HepG2 (cell line): ENCODE measurements at regions of chr2 and their contacts with region 1.

Region 1: DNA sequence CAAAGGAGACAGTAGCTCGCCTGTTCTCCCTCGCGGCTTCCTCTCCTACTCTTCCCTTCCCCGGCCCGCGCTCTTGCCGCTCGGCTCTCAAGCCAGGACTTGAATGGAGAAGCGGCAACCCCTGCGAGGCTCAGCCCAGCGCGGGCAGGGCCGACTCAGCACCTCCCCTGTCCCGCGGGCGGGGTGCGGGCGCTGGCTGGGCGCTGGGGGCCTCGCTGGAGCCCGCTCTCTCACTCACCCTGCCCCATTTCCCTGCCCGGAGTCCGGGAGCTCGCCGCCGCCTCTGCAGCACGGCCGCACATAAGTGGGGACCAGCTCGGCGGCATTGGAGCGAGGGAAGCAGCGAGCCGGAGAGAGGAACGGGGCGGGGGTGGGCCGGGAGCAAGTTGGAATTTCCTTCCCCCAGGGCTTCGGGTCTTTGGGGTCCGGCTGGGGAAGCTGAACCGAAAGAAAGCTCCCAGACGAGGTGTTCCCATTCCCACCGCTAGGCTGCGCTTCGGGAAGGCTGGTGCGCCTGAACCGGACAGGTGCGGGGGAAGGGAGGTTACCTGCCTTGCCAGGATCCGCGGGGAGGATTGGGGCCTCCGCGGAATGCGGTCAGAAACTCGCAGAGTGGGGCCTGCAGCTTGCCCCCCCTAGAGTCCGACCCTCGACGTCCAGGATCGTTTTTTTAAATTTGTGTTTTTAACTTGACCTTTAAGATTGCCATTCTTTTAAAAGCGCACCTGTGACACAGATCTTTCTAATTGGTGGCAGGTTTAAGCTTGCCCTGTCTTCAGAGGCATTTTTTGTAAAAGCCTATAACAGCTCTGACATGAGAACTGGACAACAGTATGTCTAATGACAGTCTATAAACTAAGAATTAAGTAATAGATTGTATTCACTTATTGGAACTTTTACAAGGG is at the start of gene COBLL1:
- DNase-seq: peak; percentile 84
- ATAC-seq: peak; percentile 77
- H3K4me3 ChIP-seq: peak within 1 kb of the TSS; percentile 76 to 96 (median 89)
- H3K27ac ChIP-seq: peak within 1 kb of the TSS; percentile 99
- H3K4me1 ChIP-seq: peaks cover 40% of the 10 kb centered on the region
- H3K27me3 ChIP-seq: no peaks in the 10 kb centered on the region; a peak in 1 of 5 replicates
- CTCF ChIP-seq: peak; percentile 98
- EP300 ChIP-seq: peak; percentile 22 to 51; a peak in 1 of 4 replicates
- POLR2A ChIP-seq: peak in 1 of 2 experiments; percentile 52; a peak in 3 of 4 replicates
- RAD21 ChIP-seq: peak; percentile 90
- total RNA-seq, gene COBLL1: 85.4 and 86.8 TPM in 2 replicates

Region 2: DNA sequence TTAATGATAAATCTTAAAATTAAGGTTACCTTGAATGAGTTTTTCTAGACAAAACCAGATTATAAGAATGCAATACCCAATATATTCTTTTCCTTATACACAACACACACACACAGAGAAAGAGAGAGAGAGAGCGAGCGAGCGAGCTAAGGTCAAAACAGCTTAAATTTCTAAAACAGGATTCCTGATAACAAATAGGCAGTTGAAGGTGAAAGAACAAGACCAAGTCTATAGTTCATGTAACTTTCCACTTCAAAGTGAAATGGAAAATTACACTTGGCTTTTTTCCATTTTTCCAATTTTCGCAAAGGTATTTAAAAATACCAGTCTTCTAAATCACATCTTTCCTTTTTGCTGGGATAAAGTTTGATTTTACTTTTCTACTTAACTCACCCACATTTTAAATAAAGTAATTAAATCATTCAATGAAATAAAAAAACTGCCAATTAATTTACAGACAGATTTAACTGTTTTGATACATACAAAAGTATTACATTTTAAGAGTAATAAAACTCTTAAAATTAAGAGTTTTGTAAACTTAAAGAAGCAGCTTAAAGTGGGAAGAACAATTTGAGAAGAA is 99.1 kb before region 1 on chr2:
- CTCF ChIA-PET with region 1: interaction called, 12 read pairs
- POLR2A ChIA-PET with region 1: interaction called, 18 read pairs
- in situ Hi-C with region 1: loop called (anchors 5 kb)
- intact Hi-C with region 1: no loop called
- DNase-seq: peak; percentile 95
- ATAC-seq: peak; percentile 70
- H3K4me3 ChIP-seq: peak overlapping the region in 2 of 3 experiments; percentile 1 to 17; a peak in 3 of 6 replicates
- H3K27ac ChIP-seq: peak overlapping the region; percentile 86
- H3K4me1 ChIP-seq: peaks cover 100% of the 10 kb centered on the region
- H3K27me3 ChIP-seq: no peaks in the 10 kb centered on the region
- CTCF ChIP-seq: no peak
- EP300 ChIP-seq: peak; percentile 80 to 100; a peak in 3 of 4 replicates
- POLR2A ChIP-seq: no peak
- RAD21 ChIP-seq: no peak

Region 3: DNA sequence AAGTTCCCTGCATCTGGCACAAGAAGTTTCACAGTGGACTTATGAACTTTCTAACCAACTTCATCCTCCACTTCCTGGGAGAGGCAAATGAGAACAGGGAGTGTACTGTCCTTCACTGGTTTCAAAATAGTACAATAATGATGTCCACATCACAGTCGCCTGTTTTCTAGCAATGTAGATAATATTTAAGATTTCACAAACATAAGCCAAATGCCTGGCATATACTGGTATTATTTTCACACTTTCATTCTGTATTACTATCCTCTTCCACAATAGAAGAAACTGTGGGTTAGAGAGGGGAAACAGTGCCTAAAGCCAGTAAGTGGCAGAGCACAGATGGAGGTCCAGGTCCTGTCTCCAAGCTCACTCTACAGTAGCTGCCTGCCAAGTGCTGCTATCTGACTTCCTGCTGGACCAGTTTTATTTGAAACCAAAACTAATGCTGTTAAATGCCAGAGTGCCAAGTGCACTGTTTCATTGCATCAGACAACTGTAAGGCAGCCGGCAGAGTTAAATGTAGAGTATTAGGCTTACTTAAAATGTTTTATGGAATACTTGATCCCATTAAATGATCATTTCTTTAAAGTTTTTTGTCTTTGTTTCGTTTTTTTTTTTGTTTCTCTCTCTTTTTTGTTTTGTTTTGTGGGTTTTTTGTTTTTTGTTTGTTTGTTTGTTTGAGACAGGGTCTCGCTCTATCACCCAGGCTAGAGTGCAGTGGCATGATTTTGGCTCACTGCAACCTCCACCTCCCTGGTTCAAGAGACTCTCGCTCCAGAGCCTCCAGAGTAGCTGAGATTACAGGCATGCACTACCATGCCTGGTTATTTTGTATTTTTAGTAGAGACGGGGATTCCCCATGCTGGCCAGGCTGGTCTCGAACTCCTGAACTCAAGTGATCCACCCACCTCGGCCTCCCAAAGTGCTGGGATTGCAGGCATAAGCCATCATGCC is 15.4 kb before region 1 on chr2:
- CTCF ChIA-PET with region 1: no interaction called
- POLR2A ChIA-PET with region 1: interaction called, 23 read pairs
- in situ Hi-C with region 1: no loop called
- intact Hi-C with region 1: loop called (anchors 2 kb)
- DNase-seq: peak; percentile 81
- ATAC-seq: peak; percentile 91
- H3K4me3 ChIP-seq: peak overlapping the region in 1 of 3 experiments; percentile 14; a peak in 1 of 6 replicates
- H3K27ac ChIP-seq: peak overlapping the region; percentile 58
- H3K4me1 ChIP-seq: peaks cover 81% of the 10 kb centered on the region
- H3K27me3 ChIP-seq: no peaks in the 10 kb centered on the region
- CTCF ChIP-seq: no peak
- EP300 ChIP-seq: peak in 1 of 2 experiments; percentile 50; a peak in 1 of 4 replicates
- POLR2A ChIP-seq: no peak
- RAD21 ChIP-seq: no peak

Region 4: GRCh38 chr2:164859251-164859800 is 17.4 kb after region 1 on chr2:
- CTCF ChIA-PET with region 1: no interaction called
- POLR2A ChIA-PET with region 1: interaction called, 71 read pairs
- in situ Hi-C with region 1: no loop called
- intact Hi-C with region 1: loop called (anchors 2 kb)
- DNase-seq: no peak
- ATAC-seq: peak; percentile 67
- H3K4me3 ChIP-seq: peak overlapping the region in 1 of 3 experiments; percentile 2; a peak in 1 of 6 replicates
- H3K27ac ChIP-seq: peak overlapping the region; percentile 65
- H3K4me1 ChIP-seq: peaks cover 44% of the 10 kb centered on the region
- H3K27me3 ChIP-seq: no peaks in the 10 kb centered on the region
- CTCF ChIP-seq: no peak
- EP300 ChIP-seq: no peak
- POLR2A ChIP-seq: no peak
- RAD21 ChIP-seq: no peak

Region 5: DNA sequence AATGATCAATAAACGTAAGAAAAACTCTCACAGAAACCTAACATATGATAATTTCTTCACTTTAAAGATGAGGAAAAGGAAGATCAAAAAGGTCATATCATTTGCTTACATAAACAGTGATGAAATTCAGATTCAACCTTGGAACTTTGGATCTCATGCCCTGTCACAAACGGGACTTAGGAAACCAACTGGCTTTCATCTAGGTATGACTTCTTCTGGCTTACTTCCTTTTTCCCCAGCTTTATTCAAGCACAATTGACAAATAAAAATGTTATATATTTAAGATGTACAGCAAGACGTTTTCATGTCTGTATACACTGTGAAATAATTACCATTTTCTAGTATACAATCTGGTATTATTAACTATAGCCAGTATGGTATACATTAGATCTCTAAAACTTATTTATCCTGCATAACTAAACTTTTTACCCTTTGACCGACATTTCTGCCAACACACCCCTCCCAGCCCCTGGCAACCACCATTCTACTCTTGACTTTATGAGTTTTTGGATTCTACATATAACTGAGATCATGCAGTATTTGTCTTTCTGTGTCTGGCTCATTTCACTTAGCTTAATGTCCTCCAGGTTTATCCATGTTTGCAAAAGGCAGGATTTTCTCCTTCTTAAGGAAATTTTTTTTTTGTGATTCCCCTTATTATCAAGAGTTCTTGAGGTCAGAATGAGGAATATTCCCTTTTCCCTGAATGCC is 45.6 kb after region 1 on chr2:
- CTCF ChIA-PET with region 1: no interaction called
- POLR2A ChIA-PET with region 1: interaction called, 19 read pairs
- in situ Hi-C with region 1: no loop called
- intact Hi-C with region 1: no loop called
- DNase-seq: peak; percentile 97
- ATAC-seq: peak; percentile 94
- H3K4me3 ChIP-seq: peak overlapping the region in 2 of 3 experiments; percentile 24 to 34; a peak in 3 of 6 replicates
- H3K27ac ChIP-seq: peak overlapping the region; percentile 94
- H3K4me1 ChIP-seq: peaks cover 50% of the 10 kb centered on the region
- H3K27me3 ChIP-seq: no peaks in the 10 kb centered on the region
- CTCF ChIP-seq: no peak
- EP300 ChIP-seq: peak; percentile 66 to 99
- POLR2A ChIP-seq: no peak
- RAD21 ChIP-seq: no peak; the same call in 1 of the 2 replicates

Region 6: DNA sequence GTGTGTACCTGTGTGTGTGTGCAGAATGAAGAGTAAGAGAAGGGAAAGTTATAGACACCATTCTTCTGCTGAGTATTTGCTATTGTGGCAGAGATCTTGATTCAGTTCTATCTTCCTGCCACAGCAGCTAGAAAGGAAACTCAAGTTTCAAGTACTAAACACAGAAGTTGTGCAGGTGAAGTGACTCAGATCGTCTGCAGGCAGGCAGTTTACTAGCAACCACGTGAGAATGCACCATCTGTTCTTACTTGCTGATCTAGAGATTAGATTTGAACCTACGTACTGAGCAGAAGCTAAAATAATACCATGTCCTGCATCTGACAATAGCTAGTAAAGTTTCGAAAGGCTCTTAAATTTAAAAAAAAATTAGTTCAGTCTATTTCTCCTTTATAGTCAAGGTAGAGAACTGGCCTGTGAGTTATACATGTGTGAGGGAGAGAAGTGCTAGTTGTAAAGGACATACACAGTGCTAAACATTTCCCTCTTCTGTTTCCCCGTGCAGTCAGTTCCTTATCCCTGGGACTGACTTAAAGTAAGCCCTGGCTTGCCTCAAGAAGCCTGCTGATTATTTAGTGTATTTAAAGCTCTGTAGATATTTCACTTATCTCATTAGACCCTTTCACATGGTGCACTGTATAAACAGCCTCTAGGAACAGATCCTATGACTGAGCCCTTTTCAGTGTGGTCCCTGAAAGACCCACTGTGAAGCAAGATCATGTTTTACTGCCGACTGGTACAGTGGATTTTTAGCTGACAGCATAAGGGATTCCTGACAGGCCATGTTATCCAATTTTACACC is 68.3 kb after region 1 on chr2:
- CTCF ChIA-PET with region 1: interaction called, 14 read pairs
- POLR2A ChIA-PET with region 1: interaction called, 45 read pairs
- in situ Hi-C with region 1: loop called (anchors 5 kb)
- intact Hi-C with region 1: loop called (anchors 1 kb)
- DNase-seq: peak; percentile 63
- ATAC-seq: peak; percentile 70
- H3K4me3 ChIP-seq: no peak overlapping the region
- H3K27ac ChIP-seq: peak overlapping the region; percentile 60
- H3K4me1 ChIP-seq: peaks cover 58% of the 10 kb centered on the region
- H3K27me3 ChIP-seq: no peaks in the 10 kb centered on the region
- CTCF ChIP-seq: no peak
- EP300 ChIP-seq: no peak
- POLR2A ChIP-seq: no peak
- RAD21 ChIP-seq: no peak